GM10248 (cell line): ENCODE measurements at regions of chr6 and their contacts with region 1.

Region 1: GRCh38 chr6:151690768-151691562 is 116.5 kb upstream of the ESR1 start:
- DNase-seq: peak; percentile 32
- CTCF ChIP-seq: no peak

Region 2: GRCh38 chr6:151675746-151676416 is 15.1 kb before region 1 on chr6:
- CTCF ChIA-PET with region 1: interaction called, 26 read pairs
- POLR2A ChIA-PET with region 1: no interaction called
- DNase-seq: peak; percentile 69
- CTCF ChIP-seq: peak; percentile 79